ENCODE measurements at regions of chr6 and their contacts with region 1.

Region 1: DNA sequence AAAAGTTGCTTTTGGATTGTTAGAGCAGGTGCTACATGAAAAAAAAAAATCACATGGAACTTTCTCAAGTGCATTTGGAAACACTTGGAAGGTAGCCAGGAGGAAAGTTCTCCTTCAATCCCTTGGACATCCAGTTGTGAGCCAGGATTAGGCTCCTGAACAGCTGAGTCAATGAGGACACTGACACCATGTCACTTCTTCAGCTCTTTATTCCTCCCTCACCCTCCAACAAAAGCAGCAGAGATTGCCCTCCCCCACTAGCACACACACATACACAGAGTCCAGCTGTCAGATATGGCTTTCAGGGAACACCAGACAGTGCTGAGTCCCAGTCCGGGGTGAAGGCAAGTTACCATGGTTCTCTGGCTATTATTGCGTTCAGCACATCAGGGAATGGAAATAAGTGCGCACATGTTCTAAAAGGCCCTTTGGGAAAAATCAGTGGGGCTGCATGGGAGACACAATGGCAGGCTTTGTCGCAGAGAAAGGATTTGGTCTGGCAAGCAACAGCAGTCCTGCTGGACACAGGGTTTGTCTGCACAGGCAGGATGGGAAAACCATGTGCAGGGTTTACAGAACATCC is 124.7 kb upstream of the MARCKS start:
- DNase-seq: peak; percentile 37 to 68 (median 53)
- ATAC-seq: peak; percentile 94 to 99 (median 94)
- H3K4me3 ChIP-seq: peak overlapping the region in 5 of 12 donors; percentile 0 to 12 (median 1)
- H3K27ac ChIP-seq: peak overlapping the region in 9 of 12 donors; percentile 5 to 63 (median 32)
- H3K4me1 ChIP-seq: peaks cover 0 to 26% (median 15%) of the 10 kb centered on the region in 12 donors
- H3K27me3 ChIP-seq: no peaks in the 10 kb centered on the region
- CTCF ChIP-seq: peak in 5 of 12 donors; percentile 17 to 47 (median 33)
- POLR2A ChIP-seq: no peak

Region 2: GRCh38 chr6:113414511-113414910 is 318.0 kb before region 1 on chr6:
- intact Hi-C with region 1: loop called in 1 of 10 experiments (anchors 10 kb)
- DNase-seq: peak in 4 of 5 donors; percentile 19 to 42 (median 34)
- ATAC-seq: peak in 3 of 4 donors; percentile 70 to 84 (median 81)
- H3K4me3 ChIP-seq: no peak overlapping the region
- H3K27ac ChIP-seq: no peak overlapping the region
- H3K4me1 ChIP-seq: peaks cover 0 to 14% (median 0%) of the 10 kb centered on the region in 12 donors
- H3K27me3 ChIP-seq: no peaks in the 10 kb centered on the region
- CTCF ChIP-seq: peak; percentile 21 to 69 (median 53)
- POLR2A ChIP-seq: no peak

Region 3: GRCh38 chr6:113672491-113673149 is 59.9 kb before region 1 on chr6:
- intact Hi-C with region 1: loop called in 1 of 10 experiments (anchors 5 kb)
- DNase-seq: peak; percentile 35 to 74 (median 43)
- ATAC-seq: peak in 3 of 4 donors; percentile 60 to 78 (median 75)
- H3K4me3 ChIP-seq: peak overlapping the region in 10 of 12 donors; percentile 3 to 43 (median 20)
- H3K27ac ChIP-seq: peak overlapping the region in 8 of 12 donors; percentile 22 to 73 (median 48)
- H3K4me1 ChIP-seq: peaks cover 0 to 42% (median 19%) of the 10 kb centered on the region in 12 donors
- H3K27me3 ChIP-seq: no peaks in the 10 kb centered on the region
- CTCF ChIP-seq: no peak
- POLR2A ChIP-seq: no peak

Region 4: GRCh38 chr6:113873043-113873667 is 140.7 kb after region 1 on chr6:
- intact Hi-C with region 1: no loop called
- DNase-seq: peak in 4 of 5 donors; percentile 12 to 71 (median 35)
- ATAC-seq: peak in 1 of 4 donors; percentile 26
- H3K4me3 ChIP-seq: peak overlapping the region in 7 of 12 donors; percentile 2 to 38 (median 13)
- H3K27ac ChIP-seq: no peak overlapping the region
- H3K4me1 ChIP-seq: no peaks in the 10 kb centered on the region
- H3K27me3 ChIP-seq: no peaks in the 10 kb centered on the region
- CTCF ChIP-seq: no peak
- POLR2A ChIP-seq: no peak